ENCODE measurements at regions of chr16 and their contacts with region 1.

Region 1: GRCh38 chr16:29700253-29700987 is 21.4 kb downstream of the QPRT start:
- DNase-seq: peak; percentile 73 to 86
- ATAC-seq: peak; percentile 89 to 98 (median 94)
- H3K4me3 ChIP-seq: no peak overlapping the region
- H3K27ac ChIP-seq: no peak overlapping the region
- H3K4me1 ChIP-seq: no peaks in the 10 kb centered on the region
- H3K27me3 ChIP-seq: no peaks in the 10 kb centered on the region
- CTCF ChIP-seq: peak; percentile 91

Region 2: GRCh38 chr16:29729116-29729521 is 28.7 kb after region 1 on chr16:
- intact Hi-C with region 1: no loop called
- DNase-seq: no peak
- ATAC-seq: peak in 2 of 4 donors; percentile 50 to 73
- H3K4me3 ChIP-seq: peak overlapping the region; percentile 22
- H3K27ac ChIP-seq: no peak overlapping the region
- H3K4me1 ChIP-seq: no peaks in the 10 kb centered on the region
- H3K27me3 ChIP-seq: no peaks in the 10 kb centered on the region
- CTCF ChIP-seq: peak; percentile 42

Region 3: GRCh38 chr16:29757950-29758466 is 57.6 kb after region 1 on chr16:
- intact Hi-C with region 1: no loop called
- DNase-seq: no peak
- ATAC-seq: no peak
- H3K4me3 ChIP-seq: no peak overlapping the region
- H3K27ac ChIP-seq: no peak overlapping the region
- H3K4me1 ChIP-seq: no peaks in the 10 kb centered on the region
- H3K27me3 ChIP-seq: no peaks in the 10 kb centered on the region
- CTCF ChIP-seq: no peak

Region 4: DNA sequence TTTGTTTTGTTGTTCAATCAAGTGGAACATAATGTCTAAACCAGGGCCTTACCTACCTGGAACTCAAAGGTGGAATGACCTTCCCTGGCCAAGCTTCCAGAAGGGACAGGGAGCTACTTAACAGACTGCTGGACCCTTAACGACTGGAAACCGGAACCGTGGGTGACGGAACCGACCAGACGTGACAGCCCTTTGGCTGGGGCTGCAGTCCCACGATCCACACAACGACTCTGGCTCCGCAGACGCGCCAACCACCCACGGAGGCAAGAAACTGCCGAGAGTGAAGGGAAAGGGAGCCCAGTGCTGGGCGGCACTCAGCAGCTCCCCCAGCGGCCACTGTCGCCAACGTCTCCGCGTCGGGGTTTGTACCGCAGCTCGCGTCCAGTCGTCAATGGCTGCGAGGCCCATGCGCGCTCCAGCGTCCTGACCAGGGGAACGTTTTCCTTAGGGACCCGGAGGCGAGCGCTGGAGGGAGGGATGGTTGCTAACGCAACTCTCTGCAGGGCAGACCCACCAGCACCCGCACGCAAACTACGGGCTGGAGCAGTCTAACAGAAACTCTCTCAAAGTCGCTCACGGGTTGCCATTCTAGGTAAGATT is 84.6 kb after region 1 on chr16:
- intact Hi-C with region 1: loop called in 1 of 2 experiments (anchors 10 kb)
- DNase-seq: peak; percentile 80 to 88
- ATAC-seq: peak; percentile 83 to 93 (median 92)
- H3K4me3 ChIP-seq: peak overlapping the region; percentile 57
- H3K27ac ChIP-seq: no peak overlapping the region
- H3K4me1 ChIP-seq: peaks cover 11% of the 10 kb centered on the region
- H3K27me3 ChIP-seq: no peaks in the 10 kb centered on the region
- CTCF ChIP-seq: peak; percentile 85

Region 5: DNA sequence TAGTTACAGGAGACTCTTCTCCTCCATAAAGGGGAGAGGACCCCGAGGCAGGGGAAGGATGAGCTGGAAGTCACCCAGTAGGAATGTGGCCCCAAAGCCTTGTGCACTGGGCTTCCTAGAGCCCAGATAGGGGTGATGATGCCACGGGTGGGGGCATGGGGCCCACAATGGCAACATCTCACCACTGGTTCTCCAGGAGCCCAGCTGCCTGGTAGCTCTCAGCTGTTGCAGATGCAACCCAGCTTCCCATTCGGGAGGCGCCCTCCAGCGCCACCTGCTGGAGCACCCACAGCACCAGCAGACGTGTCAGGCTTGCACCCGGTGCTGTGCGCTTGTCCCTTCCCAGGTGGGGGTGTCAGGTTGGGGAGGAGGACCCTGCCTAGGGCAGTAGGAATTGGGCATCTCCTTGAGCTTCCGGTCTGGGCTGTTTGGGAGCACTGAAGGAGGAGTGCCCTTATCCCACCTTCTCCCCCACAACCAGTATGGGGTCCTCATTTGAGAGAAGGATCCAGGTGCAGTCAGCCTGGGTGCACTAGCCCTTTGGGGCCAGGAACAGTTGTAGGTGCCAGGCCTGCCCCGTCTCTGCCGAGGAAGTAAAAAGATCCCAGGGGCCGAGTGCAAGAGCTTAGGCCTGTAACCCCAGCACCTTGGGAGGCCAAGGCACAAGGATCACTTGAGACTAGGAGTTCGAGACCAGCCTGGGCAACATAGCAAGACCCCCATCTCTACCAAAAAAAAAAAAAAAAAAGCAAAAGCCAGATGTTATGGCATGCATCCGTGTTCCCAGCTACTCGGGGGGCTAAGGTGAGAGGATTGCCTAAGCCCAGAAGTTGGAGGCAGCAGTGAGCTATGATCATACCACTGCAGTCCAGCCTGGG is 148.2 kb after region 1 on chr16:
- intact Hi-C with region 1: loop called in 1 of 2 experiments (anchors 5 kb)
- DNase-seq: peak; percentile 80 to 91
- ATAC-seq: peak; percentile 79 to 90 (median 84)
- H3K4me3 ChIP-seq: no peak overlapping the region
- H3K27ac ChIP-seq: no peak overlapping the region
- H3K4me1 ChIP-seq: no peaks in the 10 kb centered on the region
- H3K27me3 ChIP-seq: no peaks in the 10 kb centered on the region
- CTCF ChIP-seq: peak; percentile 86

Region 6: GRCh38 chr16:30005341-30006094 is 305.1 kb after region 1 on chr16:
- intact Hi-C with region 1: loop called in 1 of 2 experiments (anchors 5 kb)
- DNase-seq: peak in 1 of 2 donors; percentile 72
- ATAC-seq: peak; percentile 67 to 85 (median 73)
- H3K4me3 ChIP-seq: no peak overlapping the region
- H3K27ac ChIP-seq: no peak overlapping the region
- H3K4me1 ChIP-seq: no peaks in the 10 kb centered on the region
- H3K27me3 ChIP-seq: peaks cover 0 to 15% (median 6%) of the 10 kb centered on the region in 3 donors
- CTCF ChIP-seq: peak; percentile 83

Region 7: GRCh38 chr16:30018731-30019158 is 318.3 kb after region 1 on chr16:
- intact Hi-C with region 1: loop called (anchors 2 to 10 kb)
- DNase-seq: no peak
- ATAC-seq: no peak
- H3K4me3 ChIP-seq: no peak overlapping the region
- H3K27ac ChIP-seq: no peak overlapping the region
- H3K4me1 ChIP-seq: no peaks in the 10 kb centered on the region
- H3K27me3 ChIP-seq: peaks cover 0 to 8% (median 0%) of the 10 kb centered on the region in 3 donors
- CTCF ChIP-seq: no peak